A549 (cell line): ENCODE measurements at regions of chr5 and their contacts with region 1.

Region 1: DNA sequence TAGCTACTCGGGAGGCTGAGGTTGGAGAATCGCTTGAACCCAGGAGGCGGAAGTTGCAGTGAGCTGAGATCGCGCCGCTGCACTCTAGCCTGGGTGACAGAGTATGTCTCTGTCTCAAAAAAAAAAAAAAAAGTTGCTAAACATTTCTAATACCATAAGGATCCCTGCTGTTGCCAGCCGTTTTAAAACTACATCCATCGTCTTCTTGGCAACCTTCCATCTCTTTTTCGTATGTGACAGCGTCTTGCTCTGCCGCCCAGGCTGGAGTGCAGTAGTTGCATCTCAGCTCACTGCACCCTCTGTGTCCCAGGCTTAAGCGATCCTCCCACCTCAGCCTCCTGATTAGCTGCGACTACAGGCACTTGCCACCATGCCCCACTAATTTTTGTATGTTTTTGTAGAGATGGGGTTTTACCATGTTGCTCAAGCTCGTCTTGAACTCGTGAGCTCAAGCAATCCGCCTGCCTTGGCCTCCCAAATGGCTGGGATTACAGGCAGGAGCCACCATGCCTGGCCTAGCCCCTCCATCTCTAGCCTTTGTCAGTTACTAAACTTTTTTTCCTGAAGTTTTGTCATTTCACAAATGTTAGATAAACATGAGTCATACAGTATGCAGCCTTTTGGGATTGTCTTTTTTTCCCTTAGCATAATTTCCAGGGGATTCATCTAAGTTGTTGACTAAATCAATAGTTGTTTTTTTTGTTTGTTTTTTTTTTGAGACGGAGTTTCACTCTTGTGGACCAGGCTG is 13.5 kb downstream of the NSD1 start:
- DNase-seq: no peak
- ATAC-seq: peak in 1 of 2 experiments; percentile 43; a peak in 1 of 6 replicates
- H3K4me3 ChIP-seq: no peak overlapping the region
- H3K27ac ChIP-seq: 0 out of 6 replicates have a peak overlapping the region, but pooled peaks of 1 of the 2 experiments have one; percentile 17
- H3K4me1 ChIP-seq: peaks cover 12% of the 10 kb centered on the region; the same call in 2 of the 3 replicates
- CTCF ChIP-seq: no peak
- EP300 ChIP-seq: no peak
- POLR2A ChIP-seq: no peak
- RAD21 ChIP-seq: no peak

Region 2: GRCh38 chr5:177194274-177194673 is 47.2 kb after region 1 on chr5:
- CTCF ChIA-PET with region 1: no interaction called
- POLR2A ChIA-PET with region 1: interaction called, 10 read pairs
- DNase-seq: peak; percentile 33 to 82
- ATAC-seq: peak; percentile 93 to 99
- H3K4me3 ChIP-seq: no peak overlapping the region
- H3K27ac ChIP-seq: peak overlapping the region in 1 of 2 experiments; percentile 62; a peak in 3 of 6 replicates
- H3K4me1 ChIP-seq: peaks cover 16% of the 10 kb centered on the region
- CTCF ChIP-seq: no peak
- EP300 ChIP-seq: no peak
- POLR2A ChIP-seq: no peak
- RAD21 ChIP-seq: no peak